Activated CD8-positive, alpha-beta T cell treated with anti-CD3 and anti-CD28 coated beads, Interleukin-2, amount 10 ng/mL, durations not matched to agents 7 days and 5 days (primary cell): ENCODE measurements at regions of chr11 and their contacts with region 1.

Region 1: DNA sequence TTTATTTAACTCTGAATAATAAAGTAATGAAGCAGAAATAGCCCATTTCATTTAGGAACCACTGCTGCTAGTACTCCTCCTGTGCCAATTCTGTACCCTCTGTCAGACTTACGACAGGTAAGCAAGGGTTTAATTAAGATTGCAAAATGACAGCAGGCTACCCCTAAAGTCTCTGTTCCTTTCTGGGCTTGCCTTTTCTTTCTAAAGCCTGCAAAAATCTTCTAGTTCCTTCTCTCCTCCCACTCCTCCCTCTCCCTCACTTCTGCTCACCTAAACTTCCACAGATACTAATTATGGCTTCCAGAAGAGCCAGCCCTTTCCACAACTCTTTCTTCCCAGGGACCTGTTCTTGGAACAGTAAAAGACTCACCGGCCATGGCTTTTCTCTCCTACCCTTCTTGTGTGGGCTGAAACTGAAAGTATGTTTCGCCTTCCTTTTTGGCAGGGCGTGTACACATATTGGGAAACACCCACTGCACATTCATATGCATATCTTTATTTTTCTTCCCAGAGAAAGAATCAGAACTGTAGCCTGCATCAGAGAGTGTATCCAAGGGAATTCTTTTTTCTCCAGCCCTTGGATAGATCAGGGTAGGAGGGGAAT is at the start of gene CARD16:
- DNase-seq: peak; percentile 70
- ATAC-seq: peak; percentile 96
- H3K4me3 Mint-ChIP-seq: peak within 1 kb of the TSS; percentile 89
- H3K27ac Mint-ChIP-seq: peak within 1 kb of the TSS; percentile 92
- H3K4me1 Mint-ChIP-seq: peaks cover 47% of the 10 kb centered on the region
- H3K27me3 Mint-ChIP-seq: no peaks in the 10 kb centered on the region
- total RNA-seq, gene CARD16: 70.8 to 73.9 TPM

Region 2: DNA sequence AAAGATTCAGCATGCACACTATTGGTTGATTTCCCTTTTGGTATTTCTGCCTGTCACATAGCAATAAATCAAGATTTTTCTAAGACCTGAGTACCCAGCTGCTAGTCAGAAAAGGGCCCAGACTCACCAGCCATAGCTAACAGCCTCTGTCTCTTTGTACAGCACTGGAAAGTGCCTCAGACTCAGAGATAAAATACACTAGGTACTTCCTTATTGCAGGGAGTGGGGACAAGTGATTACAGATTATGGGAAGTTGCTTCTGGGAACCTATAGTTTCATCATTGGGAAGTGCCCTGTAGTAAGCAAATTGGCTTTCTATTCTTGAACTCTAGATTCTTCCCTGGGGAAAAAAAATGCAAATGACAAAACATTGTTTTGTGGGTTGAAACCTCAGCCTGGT is 22.0 kb before region 1 on chr11 and contains the start of gene CASP5:
- CTCF ChIA-PET with region 1: no interaction called
- POLR2A ChIA-PET with region 1: no interaction called
- DNase-seq: no peak
- ATAC-seq: no peak
- H3K4me3 Mint-ChIP-seq: no peak within 1 kb of the TSS
- H3K27ac Mint-ChIP-seq: no peak within 1 kb of the TSS
- H3K4me1 Mint-ChIP-seq: peaks cover 4% of the 10 kb centered on the region
- H3K27me3 Mint-ChIP-seq: no peaks in the 10 kb centered on the region
- total RNA-seq, gene CASP5: not detected

Region 3: GRCh38 chr11:105033343-105033742 is 11.7 kb before region 1 on chr11:
- CTCF ChIA-PET with region 1: interaction called, 10 read pairs
- POLR2A ChIA-PET with region 1: interaction called, 3 read pairs
- DNase-seq: no peak
- ATAC-seq: peak; percentile 40
- H3K4me3 Mint-ChIP-seq: peak overlapping the region; percentile 87
- H3K27ac Mint-ChIP-seq: peak overlapping the region; percentile 58
- H3K4me1 Mint-ChIP-seq: peaks cover 42% of the 10 kb centered on the region
- H3K27me3 Mint-ChIP-seq: no peaks in the 10 kb centered on the region